ENCODE measurements at regions of chr15 and their contacts with region 1.

Region 1: GRCh38 chr15:76514292-76514691 is 177.7 kb downstream of the ISL2 start:
- DNase-seq: no peak
- H3K4me3 ChIP-seq: no peak overlapping the region
- H3K27ac ChIP-seq: no peak overlapping the region
- H3K4me1 ChIP-seq: peaks cover 0 to 14% (median 3%) of the 10 kb centered on the region in 4 donors
- H3K27me3 ChIP-seq: no peaks in the 10 kb centered on the region
- CTCF ChIP-seq: no peak
- EP300 ChIP-seq: no peak
- POLR2A ChIP-seq: no peak

Region 2: DNA sequence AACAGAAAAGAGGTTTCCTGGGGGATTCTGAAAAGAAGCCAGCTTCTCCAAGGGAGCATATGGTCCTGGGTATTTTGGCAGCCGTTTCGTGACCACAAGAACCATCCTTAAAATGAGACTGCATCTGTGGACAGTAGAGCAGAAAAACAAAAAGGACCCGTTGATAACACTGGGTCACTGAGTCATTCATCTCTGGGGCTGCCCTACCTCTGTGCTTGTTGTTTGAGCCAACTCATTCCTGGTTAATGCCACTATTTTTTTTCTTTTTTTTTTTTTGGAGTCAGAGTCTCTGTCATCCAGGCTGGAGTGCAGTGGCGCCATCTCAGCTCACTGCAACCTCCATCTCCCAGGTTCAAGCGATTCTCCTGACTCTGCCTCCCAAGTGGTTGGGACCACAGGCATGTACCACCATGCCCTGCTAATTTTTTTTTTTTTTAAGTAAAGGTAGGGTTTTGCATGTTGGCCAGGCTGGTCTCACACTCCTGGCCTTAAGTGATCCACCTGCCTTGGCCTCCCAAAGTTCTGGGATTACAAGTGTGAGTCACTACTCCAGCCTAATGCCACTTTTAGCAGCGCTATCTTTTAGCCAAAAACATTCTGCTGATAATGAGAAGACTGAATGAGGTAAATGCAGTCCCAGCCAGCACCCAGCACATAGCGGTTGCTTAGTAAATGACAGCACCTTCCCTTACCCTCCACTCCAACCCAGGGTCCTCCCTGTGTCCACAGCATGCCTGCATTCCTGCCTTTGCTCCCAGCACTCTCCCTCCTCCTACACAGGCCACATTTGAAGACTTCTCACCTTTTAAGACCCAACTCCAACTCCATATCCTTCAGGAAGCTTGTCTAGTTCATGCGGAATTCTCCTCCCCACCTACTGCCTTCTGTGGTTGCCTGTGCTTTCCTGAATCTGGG is 186.8 kb before region 1 on chr15:
- in situ Hi-C with region 1: no loop called
- intact Hi-C with region 1: loop called (anchors 5 kb)
- DNase-seq: no peak
- H3K4me3 ChIP-seq: no peak overlapping the region
- H3K27ac ChIP-seq: no peak overlapping the region
- H3K4me1 ChIP-seq: no peaks in the 10 kb centered on the region
- H3K27me3 ChIP-seq: peaks cover 32% of the 10 kb centered on the region
- CTCF ChIP-seq: no peak
- EP300 ChIP-seq: no peak
- POLR2A ChIP-seq: no peak

Region 3: DNA sequence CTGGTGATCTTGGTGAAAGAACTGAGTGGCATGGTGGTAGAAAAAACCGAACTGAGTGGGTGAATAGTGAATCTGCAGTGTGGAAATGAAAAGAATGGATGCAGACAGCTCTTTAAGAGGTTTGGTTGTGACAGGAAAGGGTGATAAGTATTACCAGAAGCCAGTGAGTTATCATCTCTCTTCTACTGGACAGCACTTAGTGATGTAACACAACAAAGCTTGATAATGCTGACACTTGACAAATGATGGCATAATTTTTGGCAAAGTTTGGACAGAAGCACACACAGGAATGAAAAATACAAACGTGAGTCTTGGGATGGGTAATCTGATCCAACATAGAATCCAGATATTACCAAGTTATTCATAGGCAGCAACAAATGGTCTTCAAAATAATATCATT is 65.5 kb before region 1 on chr15:
- in situ Hi-C with region 1: no loop called
- intact Hi-C with region 1: no loop called
- DNase-seq: no peak
- H3K4me3 ChIP-seq: no peak overlapping the region
- H3K27ac ChIP-seq: peak overlapping the region; percentile 14 to 68 (median 56)
- H3K4me1 ChIP-seq: peaks cover 0 to 18% (median 8%) of the 10 kb centered on the region in 4 donors
- H3K27me3 ChIP-seq: no peaks in the 10 kb centered on the region
- CTCF ChIP-seq: no peak
- EP300 ChIP-seq: no peak
- POLR2A ChIP-seq: no peak